ENCODE measurements at regions of chr14 and their contacts with region 1.

Region 1: GRCh38 chr14:77097700-77098528 is at the start of gene CIPC:
- DNase-seq: peak; percentile 100
- H3K4me3 Mint-ChIP-seq: peak within 1 kb of the TSS; percentile 85
- H3K27ac Mint-ChIP-seq: peak within 1 kb of the TSS; percentile 84
- H3K4me1 Mint-ChIP-seq: peaks cover 36% of the 10 kb centered on the region
- H3K27me3 Mint-ChIP-seq: no peaks in the 10 kb centered on the region
- total RNA-seq, gene CIPC: 7.3 to 7.5 TPM

Region 2: DNA sequence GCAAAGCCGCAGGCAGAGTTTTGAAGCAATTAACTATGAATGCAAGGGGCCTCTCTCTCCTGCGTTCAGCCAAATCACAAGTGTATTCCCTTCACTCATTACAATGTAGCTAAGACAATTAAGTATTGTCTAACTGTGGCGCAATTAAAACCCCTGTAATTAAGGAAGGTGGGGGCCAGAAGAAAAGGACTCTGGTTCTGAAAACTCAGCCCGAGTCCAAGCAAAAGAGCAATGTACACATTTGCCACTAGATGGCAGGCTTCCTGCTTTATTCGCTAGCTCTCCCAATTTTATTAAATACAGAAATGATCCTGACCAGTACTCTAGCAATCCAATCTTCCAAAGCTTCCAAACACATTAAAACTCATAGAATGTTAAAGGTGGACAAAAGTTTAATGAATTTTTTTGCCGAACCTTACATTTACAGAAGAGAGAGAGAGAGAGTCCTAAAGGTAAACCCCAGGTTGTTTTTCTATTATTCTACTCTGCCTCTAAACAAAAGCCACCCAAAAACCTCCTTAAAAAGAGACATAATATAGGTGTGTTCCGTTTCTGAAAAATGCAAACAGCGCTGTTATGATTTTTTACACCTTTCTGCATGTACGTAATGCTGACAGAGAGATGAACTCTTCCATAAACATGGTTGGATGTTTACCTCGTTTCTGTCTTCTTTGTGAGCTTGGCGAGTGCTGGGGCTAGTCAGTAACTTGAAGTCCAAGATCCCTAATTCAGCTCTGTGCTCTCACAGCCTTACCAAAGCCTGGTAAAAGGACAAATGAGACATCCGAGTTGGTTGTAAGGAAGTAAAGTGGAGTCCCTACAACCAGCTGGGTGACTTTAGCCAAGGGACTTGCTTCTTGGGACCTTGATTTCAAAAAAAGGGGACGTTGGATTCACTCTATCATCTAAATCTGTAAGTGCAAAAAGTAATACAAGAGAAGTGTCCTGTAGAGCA is 387.6 kb before region 1 on chr14:
- CTCF ChIA-PET with region 1: interaction called, 14 read pairs
- POLR2A ChIA-PET with region 1: no interaction called
- intact Hi-C with region 1: no loop called
- DNase-seq: peak; percentile 20
- H3K4me3 Mint-ChIP-seq: no peak overlapping the region
- H3K27ac Mint-ChIP-seq: no peak overlapping the region
- H3K4me1 Mint-ChIP-seq: no peaks in the 10 kb centered on the region
- H3K27me3 Mint-ChIP-seq: peaks cover 16% of the 10 kb centered on the region

Region 3: GRCh38 chr14:76904740-76905438 is 193.0 kb before region 1 on chr14:
- CTCF ChIA-PET with region 1: interaction called, 10 read pairs
- POLR2A ChIA-PET with region 1: no interaction called
- intact Hi-C with region 1: no loop called
- DNase-seq: peak; percentile 93
- H3K4me3 Mint-ChIP-seq: peak overlapping the region; percentile 14
- H3K27ac Mint-ChIP-seq: peak overlapping the region; percentile 70
- H3K4me1 Mint-ChIP-seq: peaks cover 28% of the 10 kb centered on the region
- H3K27me3 Mint-ChIP-seq: no peaks in the 10 kb centered on the region

Region 4: GRCh38 chr14:76947078-76947837 is 150.7 kb before region 1 on chr14:
- CTCF ChIA-PET with region 1: no interaction called
- POLR2A ChIA-PET with region 1: no interaction called
- intact Hi-C with region 1: no loop called
- DNase-seq: peak; percentile 91
- H3K4me3 Mint-ChIP-seq: peak overlapping the region; percentile 29
- H3K27ac Mint-ChIP-seq: peak overlapping the region; percentile 23
- H3K4me1 Mint-ChIP-seq: peaks cover 43% of the 10 kb centered on the region
- H3K27me3 Mint-ChIP-seq: no peaks in the 10 kb centered on the region

Region 5: DNA sequence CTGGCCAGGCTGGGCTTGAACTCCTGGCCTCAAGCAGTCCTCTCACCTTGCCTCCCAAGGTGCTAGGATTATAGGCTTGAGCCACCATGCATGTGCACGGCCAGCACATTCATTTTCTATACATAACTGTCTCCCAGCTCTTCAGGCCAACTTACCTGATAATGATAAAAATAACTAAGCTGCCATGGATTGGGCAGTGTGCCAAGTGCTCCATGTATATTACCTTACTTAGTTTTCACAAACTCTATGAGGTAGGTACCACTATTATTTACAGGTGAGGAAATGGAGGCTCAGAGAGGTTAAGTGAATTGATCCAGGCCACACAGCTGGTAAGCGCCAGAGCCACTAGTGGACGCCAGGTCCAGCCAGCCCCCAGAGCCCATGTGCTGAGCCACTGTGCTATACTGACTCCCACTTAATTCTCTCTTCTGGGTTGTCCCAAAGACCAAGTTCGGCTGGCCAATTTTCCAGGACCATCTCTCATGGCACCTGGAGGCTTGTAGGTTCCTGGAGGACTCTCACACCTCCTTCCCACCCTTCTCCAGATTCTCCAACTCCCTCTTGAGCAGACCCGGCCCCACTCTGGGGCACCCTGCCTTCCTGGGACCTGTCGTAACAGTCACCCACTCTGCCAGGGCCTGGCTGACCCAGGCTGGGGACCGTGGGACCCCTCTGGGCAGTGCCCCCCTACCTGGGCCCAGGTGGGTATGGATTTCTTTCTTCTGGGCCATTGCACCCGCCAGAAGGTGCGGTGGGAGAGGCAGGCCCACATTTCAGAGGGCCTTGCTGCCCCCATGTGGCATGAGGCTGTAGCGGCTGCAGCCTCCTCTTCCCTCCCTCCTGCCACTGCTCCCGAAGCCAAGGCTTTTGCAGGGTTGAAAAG is 30.0 kb before region 1 on chr14:
- CTCF ChIA-PET with region 1: interaction called, 103 read pairs
- POLR2A ChIA-PET with region 1: no interaction called
- intact Hi-C with region 1: loop called (anchors 2 kb)
- DNase-seq: peak; percentile 73
- H3K4me3 Mint-ChIP-seq: no peak overlapping the region
- H3K27ac Mint-ChIP-seq: no peak overlapping the region
- H3K4me1 Mint-ChIP-seq: no peaks in the 10 kb centered on the region
- H3K27me3 Mint-ChIP-seq: no peaks in the 10 kb centered on the region

Region 6: DNA sequence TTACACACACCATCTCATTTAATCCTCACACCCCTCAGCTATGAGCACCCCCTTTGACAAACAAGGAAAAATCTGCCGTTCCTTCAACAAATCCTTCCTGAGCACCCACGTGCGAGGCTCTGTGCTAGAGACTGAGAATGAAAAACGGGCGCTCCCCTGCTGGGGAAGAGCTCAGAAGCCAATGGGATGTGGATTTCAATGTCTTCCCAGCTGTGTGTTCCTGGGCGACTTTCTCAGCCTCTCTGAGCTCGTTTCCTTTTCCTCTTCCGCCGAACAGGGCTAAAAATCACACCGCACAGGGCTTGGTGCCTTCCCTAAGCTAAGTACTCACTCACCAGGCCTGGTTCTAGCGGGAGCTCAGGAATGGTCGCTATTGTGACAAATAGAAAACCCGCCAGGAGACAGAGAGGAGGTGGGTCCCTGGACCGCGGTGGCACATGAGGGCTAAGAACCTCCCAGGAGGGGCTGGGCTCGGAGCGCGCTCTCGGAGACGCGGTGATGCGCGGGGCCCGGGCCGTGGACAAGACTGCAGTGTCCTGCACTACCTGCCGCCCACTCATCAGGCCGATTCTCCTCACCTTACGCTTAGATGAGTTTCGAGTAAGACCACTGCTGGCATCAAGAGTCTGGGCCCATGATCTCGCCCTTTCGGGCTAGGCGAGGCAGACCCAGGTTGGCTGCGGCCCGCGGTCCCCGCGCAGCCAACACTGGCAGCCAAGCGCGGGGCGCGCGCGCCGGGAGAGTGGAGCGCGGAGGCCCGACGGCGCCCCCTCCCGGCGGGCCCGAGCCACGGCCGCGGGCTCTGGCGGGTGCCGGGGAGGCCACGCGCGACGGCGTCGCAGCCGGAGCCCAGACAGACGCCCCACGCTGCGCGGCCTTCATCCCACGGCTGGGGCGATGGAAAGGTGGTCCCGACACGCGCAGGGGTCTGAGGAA is 26.7 kb after region 1 on chr14:
- CTCF ChIA-PET with region 1: interaction called, 27 read pairs
- POLR2A ChIA-PET with region 1: interaction called, 10 read pairs
- intact Hi-C with region 1: loop called (anchors 1 kb)
- DNase-seq: peak; percentile 77
- H3K4me3 Mint-ChIP-seq: peak overlapping the region; percentile 82
- H3K27ac Mint-ChIP-seq: peak overlapping the region; percentile 73
- H3K4me1 Mint-ChIP-seq: peaks cover 50% of the 10 kb centered on the region
- H3K27me3 Mint-ChIP-seq: peaks cover 2% of the 10 kb centered on the region

Region 7: DNA sequence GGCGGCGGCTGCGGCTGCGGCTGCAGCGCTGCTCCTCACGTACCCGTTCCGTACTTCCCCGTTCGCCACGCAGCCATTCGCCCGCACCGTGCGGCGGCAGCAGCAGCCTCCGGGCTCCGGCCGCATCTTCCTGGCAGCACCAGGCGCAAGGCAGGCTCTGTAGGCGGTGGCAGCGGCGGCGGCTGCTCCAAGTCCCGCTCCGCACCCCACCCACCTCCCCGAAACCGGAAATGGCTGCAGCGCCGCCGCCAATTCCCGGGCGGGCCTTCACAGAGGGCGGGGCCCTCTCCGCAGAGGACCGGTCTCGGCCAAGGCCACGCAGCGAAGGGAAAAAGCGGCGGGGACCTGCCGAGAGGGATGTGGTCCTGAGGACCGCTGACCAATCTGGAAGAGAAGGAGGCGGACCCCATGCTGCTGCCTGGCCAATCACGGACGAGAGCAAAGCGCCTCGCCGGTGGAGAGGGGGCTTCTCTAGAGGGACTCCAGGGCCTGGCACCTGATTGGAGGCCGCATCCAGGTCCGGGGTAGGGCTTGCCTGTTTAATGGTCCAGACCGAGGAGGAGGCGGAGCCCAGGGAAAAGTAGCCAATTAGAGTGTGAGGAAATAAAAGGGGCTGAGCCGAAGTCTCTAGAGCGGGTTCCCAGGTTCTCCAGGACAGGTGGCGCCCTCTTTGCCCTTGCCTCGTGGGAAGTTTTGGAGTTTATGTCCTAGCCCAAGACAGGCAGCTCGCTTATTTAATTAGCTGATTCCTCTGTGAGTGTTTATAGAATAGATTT is 518.7 kb after region 1 on chr14 and contains the start of gene SPTLC2:
- CTCF ChIA-PET with region 1: no interaction called
- POLR2A ChIA-PET with region 1: no interaction called
- intact Hi-C with region 1: loop called (anchors 5 kb)
- DNase-seq: peak; percentile 98
- H3K4me3 Mint-ChIP-seq: peak within 1 kb of the TSS; percentile 89
- H3K27ac Mint-ChIP-seq: peak within 1 kb of the TSS; percentile 86
- H3K4me1 Mint-ChIP-seq: peaks cover 31% of the 10 kb centered on the region
- H3K27me3 Mint-ChIP-seq: no peaks in the 10 kb centered on the region
- total RNA-seq, gene SPTLC2: 23.6 to 23.9 TPM